Activated naive CD4-positive, alpha-beta T cell treated with anti-CD3 and anti-CD28 coated beads for 36 hours (primary cell): ENCODE measurements at regions of chr14 and their contacts with region 1.

Region 1: DNA sequence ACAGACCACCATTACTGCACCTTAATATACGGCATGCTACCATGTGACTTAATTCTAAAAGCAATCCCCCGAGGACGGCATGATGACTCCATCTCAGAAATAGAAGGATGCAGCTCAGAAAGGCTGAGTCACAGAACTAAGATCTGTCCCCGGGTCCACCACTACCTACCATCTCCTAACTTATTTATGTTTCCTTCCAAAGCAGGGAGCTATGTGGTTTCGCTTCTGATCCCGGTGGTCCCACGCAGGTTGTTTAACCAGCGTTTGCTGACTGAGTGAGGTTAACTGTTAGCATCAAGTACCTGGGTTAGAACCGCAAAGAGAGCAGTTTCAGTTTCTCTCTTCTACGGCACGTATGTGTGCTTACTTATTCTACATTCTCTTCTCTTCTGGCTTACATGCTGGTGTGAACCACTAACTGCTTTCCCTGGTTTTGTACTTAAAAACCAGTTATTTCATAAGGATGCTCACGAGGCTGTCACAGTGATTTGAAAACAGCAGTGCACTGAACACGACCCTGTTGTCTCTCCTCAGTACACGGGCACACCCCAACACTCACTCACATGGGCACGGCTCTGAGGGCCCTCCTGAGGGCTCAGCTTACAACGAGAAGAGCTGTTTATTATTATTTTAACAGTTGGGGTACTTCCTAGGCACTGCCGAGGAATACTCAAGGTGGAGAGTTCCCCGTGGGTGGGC is 66.7 kb downstream of the CCDC88C start:
- DNase-seq: peak; percentile 82
- H3K4me3 Mint-ChIP-seq: peak overlapping the region; percentile 69
- H3K27ac Mint-ChIP-seq: peak overlapping the region; percentile 95
- H3K4me1 Mint-ChIP-seq: peaks cover 93% of the 10 kb centered on the region
- H3K27me3 Mint-ChIP-seq: no peaks in the 10 kb centered on the region

Region 2: DNA sequence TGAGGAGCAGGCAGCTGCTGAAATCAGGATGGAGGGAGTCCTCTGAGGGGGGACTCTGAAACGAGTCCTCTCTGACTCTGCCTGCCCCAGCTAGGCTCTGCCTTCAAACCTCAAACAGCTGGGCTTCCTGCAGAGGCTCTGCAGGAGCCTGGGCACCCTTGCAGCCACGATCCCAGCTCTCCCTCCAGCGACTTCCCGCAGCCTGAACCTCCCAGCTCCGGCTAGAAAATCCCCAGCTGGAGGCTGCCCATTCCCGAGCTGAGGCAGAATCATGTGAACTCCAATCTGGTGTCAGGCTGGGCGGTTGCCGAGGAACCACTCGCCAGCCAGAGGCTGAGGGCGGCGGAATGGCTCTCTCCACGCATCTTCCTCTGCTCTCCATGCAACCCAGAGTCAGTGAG is 106.5 kb before region 1 on chr14 and contains the start of gene GPR68:
- CTCF ChIA-PET with region 1: no interaction called
- intact Hi-C with region 1: loop called (anchors 1 kb)
- DNase-seq: peak; percentile 39
- H3K4me3 Mint-ChIP-seq: peak within 1 kb of the TSS; percentile 55
- H3K27ac Mint-ChIP-seq: peak within 1 kb of the TSS; percentile 97
- H3K4me1 Mint-ChIP-seq: peaks cover 81% of the 10 kb centered on the region
- H3K27me3 Mint-ChIP-seq: no peaks in the 10 kb centered on the region
- total RNA-seq, gene GPR68: 1.2 to 1.3 TPM

Region 3: DNA sequence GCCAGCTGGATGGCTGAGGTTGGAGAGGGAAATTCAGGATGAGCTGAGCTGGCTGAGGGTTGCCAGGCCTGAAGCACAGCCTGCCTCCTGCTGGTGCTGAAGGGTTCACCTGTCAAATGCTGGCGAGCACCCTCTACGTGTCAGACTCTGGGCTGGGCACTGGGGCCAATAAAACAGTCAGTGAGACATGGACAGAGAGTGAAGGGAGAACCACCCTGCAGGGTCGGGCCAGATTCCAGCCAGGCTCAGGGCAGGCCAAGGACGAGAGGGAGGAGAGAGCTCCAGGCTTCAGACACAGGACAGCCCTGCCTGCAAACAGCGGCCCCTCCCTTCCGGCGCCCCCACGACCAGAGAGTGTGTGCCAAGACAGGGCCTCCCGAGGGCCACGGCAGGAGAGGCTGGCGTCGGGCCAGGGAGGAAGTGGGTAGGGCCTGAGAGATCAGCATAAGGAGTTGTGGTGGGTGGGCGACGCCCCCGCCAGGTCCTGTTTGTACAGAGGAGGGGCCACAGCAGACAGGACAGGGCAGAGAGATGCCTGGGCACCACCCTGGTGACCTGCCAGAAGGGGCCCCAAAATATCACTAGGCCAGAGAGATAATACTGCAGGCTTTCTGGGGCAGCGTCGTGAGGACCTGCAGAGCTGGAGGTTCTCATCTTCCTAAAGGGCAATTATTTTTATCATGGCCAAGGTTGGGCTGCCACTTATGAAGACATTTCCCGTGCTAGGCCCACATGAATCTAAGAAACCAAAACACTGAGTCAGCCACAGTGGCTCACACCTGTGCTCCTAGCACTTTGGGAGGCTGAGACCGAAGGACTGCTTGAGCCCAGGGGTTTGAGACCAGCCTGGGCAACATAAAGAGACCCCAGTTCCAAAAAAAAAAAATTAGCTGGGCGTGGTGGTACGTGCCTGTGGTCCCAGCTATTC is 33.3 kb before region 1 on chr14:
- CTCF ChIA-PET with region 1: interaction called, 5 read pairs
- intact Hi-C with region 1: loop called (anchors 1 kb)
- DNase-seq: peak; percentile 87
- H3K4me3 Mint-ChIP-seq: peak overlapping the region; percentile 60
- H3K27ac Mint-ChIP-seq: peak overlapping the region; percentile 95
- H3K4me1 Mint-ChIP-seq: peaks cover 72% of the 10 kb centered on the region
- H3K27me3 Mint-ChIP-seq: no peaks in the 10 kb centered on the region

Region 4: DNA sequence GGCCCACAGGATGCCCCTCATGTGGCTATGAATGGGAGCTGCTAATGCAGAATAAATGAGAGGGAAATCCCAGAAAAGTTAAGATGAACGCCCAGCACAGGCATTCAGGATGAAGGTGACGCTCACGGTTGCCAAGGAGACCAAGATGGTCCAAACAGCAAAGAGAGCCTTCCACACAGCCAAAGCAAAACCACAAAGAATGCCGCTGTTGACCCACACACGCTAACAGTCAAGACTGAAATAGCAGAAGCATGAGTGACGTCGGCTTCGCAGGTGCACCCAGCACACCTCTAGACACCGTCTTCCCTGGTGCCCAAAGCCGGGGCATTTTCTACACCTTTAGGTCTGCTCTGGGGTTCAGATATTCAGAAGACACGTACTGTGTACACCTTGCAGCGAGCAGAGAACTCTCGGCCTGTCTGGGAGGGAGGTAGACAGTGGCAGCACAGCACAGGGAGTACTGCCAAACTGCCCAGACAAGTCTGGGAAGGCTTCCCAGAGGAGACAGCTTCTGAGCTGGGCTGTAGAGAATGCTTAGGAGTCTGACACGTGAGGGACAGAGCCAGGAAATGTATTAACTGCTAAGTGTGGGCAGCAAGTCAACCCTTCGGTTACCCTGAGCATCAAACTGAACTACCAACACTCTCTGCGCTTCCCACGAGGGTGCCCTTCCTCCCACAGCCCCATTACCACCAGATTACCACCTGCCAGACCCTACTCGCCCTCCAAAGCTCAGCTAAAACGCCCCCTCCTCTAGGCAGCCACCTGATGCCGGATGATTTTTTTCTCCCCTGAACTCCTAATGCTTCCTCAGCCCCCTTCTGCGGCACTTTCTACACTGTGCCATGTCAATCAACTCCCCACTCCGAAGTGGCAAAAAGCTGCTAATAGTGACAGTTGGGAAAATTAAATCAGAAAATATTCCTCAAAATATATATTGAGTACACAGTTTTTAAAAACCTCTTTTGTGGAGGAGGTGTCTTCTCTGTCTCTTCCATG is 16.5 kb after region 1 on chr14:
- CTCF ChIA-PET with region 1: interaction called, 47 read pairs
- intact Hi-C with region 1: loop called (anchors 1 kb)
- DNase-seq: peak; percentile 83
- H3K4me3 Mint-ChIP-seq: peak overlapping the region; percentile 60
- H3K27ac Mint-ChIP-seq: peak overlapping the region; percentile 83
- H3K4me1 Mint-ChIP-seq: peaks cover 95% of the 10 kb centered on the region
- H3K27me3 Mint-ChIP-seq: no peaks in the 10 kb centered on the region

Region 5: GRCh38 chr14:91396959-91397815 is 46.2 kb after region 1 on chr14:
- CTCF ChIA-PET with region 1: interaction called, 10 read pairs
- intact Hi-C with region 1: loop called (anchors 1 kb)
- DNase-seq: peak; percentile 88
- H3K4me3 Mint-ChIP-seq: peak overlapping the region; percentile 64
- H3K27ac Mint-ChIP-seq: peak overlapping the region; percentile 87
- H3K4me1 Mint-ChIP-seq: peaks cover 92% of the 10 kb centered on the region
- H3K27me3 Mint-ChIP-seq: no peaks in the 10 kb centered on the region

Region 6: GRCh38 chr14:91418387-91419043 is 67.6 kb after region 1 on chr14:
- CTCF ChIA-PET with region 1: interaction called, 68 read pairs
- intact Hi-C with region 1: loop called (anchors 1 kb)
- DNase-seq: peak; percentile 84
- H3K4me3 Mint-ChIP-seq: peak overlapping the region; percentile 64
- H3K27ac Mint-ChIP-seq: peak overlapping the region; percentile 74
- H3K4me1 Mint-ChIP-seq: peaks cover 32% of the 10 kb centered on the region
- H3K27me3 Mint-ChIP-seq: no peaks in the 10 kb centered on the region